ENCODE measurements at regions of chr5 and their contacts with region 1.

Region 1: GRCh38 chr5:180648641-180649296 is 631 bp downstream of the FLT4 start:
- DNase-seq: no peak
- H3K4me3 ChIP-seq: peak overlapping the region; percentile 21 to 62 (median 30)
- H3K27ac ChIP-seq: no peak overlapping the region
- H3K4me1 ChIP-seq: peaks cover 30% of the 10 kb centered on the region
- H3K27me3 ChIP-seq: peaks cover 3 to 13% of the 10 kb centered on the region in 2 experiments
- CTCF ChIP-seq: peak; percentile 35 to 53
- POLR2A ChIP-seq: no peak

Region 2: DNA sequence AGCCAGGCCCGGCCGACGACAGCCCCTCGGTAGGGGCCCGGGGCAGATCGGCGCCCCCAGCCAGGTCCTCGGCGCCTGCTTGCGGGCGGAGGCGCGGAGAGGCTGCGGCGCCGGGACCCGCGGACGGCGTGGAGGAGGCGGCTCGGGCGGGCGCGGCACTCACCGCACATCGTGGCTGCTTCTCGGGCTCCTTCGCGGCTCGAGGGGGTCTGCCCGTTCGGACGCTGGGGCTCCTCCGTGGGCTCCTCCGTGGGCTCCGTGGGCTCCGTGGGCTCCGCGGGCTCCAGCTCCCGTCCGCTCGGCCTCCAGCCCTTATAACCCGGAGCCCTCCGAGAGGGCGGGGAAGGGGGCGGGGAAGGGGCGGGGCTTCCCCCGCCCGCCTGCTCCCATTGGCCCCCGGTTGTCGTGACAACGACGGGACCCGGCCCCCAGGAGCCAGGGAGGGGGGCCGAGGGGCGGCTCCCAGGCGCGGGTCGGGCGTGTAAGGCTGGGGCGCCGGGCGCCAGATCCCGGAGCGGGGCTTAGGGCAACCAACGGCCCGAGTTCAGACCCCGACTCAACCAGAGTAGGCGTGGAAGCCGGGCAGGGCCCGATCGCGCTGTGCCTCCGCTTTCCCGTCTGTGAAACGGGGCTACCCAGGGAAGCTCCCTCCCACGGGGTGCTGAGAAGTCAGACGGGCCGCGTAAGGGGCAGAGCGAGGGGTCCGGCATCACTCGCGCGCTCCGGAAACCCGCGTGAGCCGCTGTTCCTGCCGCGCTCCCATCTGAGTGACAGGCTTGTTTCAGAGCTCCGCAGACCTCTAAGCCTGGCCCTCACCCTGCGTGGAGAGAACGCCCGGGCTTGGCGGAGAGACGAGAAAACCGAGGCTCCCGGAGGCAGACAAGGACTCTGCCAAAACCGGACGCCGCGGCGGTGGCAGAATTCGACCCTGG is 295.5 kb before region 1 on chr5 and contains the start of gene GFPT2:
- CTCF ChIA-PET with region 1: no interaction called
- POLR2A ChIA-PET with region 1: no interaction called
- dilution Hi-C with region 1: no loop called
- intact Hi-C with region 1: loop called (anchors 5 kb)
- DNase-seq: peak; percentile 65
- H3K4me3 ChIP-seq: peak within 1 kb of the TSS; percentile 56 to 74 (median 70)
- H3K27ac ChIP-seq: peak within 1 kb of the TSS; percentile 34
- H3K4me1 ChIP-seq: peaks cover 8% of the 10 kb centered on the region
- H3K27me3 ChIP-seq: peaks cover 7 to 30% of the 10 kb centered on the region in 2 experiments
- CTCF ChIP-seq: no peak
- POLR2A ChIP-seq: no peak
- total RNA-seq, gene GFPT2: 4.5 and 5.5 TPM in 2 replicates

Region 3: GRCh38 chr5:180494060-180494509 is 154.7 kb before region 1 on chr5 and contains the start of gene CNOT6:
- CTCF ChIA-PET with region 1: no interaction called
- POLR2A ChIA-PET with region 1: no interaction called
- dilution Hi-C with region 1: no loop called
- intact Hi-C with region 1: loop called (anchors 2 kb)
- DNase-seq: peak; percentile 93
- H3K4me3 ChIP-seq: peak within 1 kb of the TSS; percentile 86 to 90 (median 87)
- H3K27ac ChIP-seq: peak within 1 kb of the TSS; percentile 74
- H3K4me1 ChIP-seq: peaks cover 7% of the 10 kb centered on the region
- H3K27me3 ChIP-seq: no peaks in the 10 kb centered on the region
- CTCF ChIP-seq: no peak
- POLR2A ChIP-seq: no peak
- total RNA-seq, gene CNOT6: 33.8 and 35.5 TPM in 2 replicates

Region 4: GRCh38 chr5:180623411-180623834 is 25.3 kb before region 1 on chr5:
- CTCF ChIA-PET with region 1: interaction called, 6 read pairs
- POLR2A ChIA-PET with region 1: no interaction called
- dilution Hi-C with region 1: no loop called
- intact Hi-C with region 1: loop called (anchors 1 kb)
- DNase-seq: peak; percentile 23
- H3K4me3 ChIP-seq: no peak overlapping the region
- H3K27ac ChIP-seq: no peak overlapping the region
- H3K4me1 ChIP-seq: peaks cover 7% of the 10 kb centered on the region
- H3K27me3 ChIP-seq: no peaks in the 10 kb centered on the region
- CTCF ChIP-seq: no peak
- POLR2A ChIP-seq: no peak

Region 5: DNA sequence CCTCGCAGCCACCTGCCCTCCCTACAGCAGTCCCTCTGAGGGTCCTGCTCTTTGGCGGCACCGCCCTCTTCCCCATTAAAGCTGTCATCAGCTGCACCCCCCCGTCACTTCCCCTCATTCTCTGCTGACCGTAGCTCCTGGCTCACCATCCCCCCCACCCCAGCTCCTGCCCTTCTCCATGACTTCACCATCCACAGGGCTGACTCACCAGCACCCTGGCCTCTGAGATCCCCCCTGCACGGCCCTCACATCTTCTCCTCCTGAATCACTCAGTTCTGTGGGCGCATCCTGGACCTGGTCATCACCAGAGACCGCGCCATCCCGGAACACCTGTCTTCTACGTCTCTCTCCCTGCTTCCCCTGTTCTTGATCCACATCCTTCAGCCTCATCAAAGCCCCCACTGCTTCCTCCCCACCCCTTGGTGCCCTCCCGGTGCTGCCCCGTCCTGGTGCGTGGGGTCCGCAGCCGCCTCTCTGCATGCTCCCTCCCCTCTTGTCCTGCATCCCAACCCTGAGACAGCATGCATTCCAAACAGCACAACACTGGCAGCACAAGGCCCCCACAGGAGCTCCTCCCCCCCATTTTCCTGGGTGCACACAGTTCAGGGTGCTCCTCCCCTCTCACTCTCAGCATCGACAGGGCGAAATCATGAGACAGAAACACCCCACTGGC is 12.2 kb before region 1 on chr5:
- CTCF ChIA-PET with region 1: no interaction called
- POLR2A ChIA-PET with region 1: no interaction called
- dilution Hi-C with region 1: no loop called
- intact Hi-C with region 1: loop called (anchors 1 kb)
- DNase-seq: peak; percentile 38
- H3K4me3 ChIP-seq: no peak overlapping the region
- H3K27ac ChIP-seq: no peak overlapping the region
- H3K4me1 ChIP-seq: no peaks in the 10 kb centered on the region
- H3K27me3 ChIP-seq: no peaks in the 10 kb centered on the region
- CTCF ChIP-seq: no peak
- POLR2A ChIP-seq: no peak

Region 6: GRCh38 chr5:180782748-180783147 is 134.0 kb after region 1 on chr5:
- CTCF ChIA-PET with region 1: no interaction called
- POLR2A ChIA-PET with region 1: no interaction called
- dilution Hi-C with region 1: no loop called
- intact Hi-C with region 1: no loop called
- DNase-seq: no peak
- H3K4me3 ChIP-seq: no peak overlapping the region
- H3K27ac ChIP-seq: no peak overlapping the region
- H3K4me1 ChIP-seq: peaks cover 30% of the 10 kb centered on the region
- H3K27me3 ChIP-seq: no peaks in the 10 kb centered on the region
- CTCF ChIP-seq: no peak
- POLR2A ChIP-seq: no peak

Region 7: GRCh38 chr5:180810210-180810958 is 161.6 kb after region 1 on chr5:
- CTCF ChIA-PET with region 1: no interaction called
- POLR2A ChIA-PET with region 1: no interaction called
- dilution Hi-C with region 1: no loop called
- intact Hi-C with region 1: loop called (anchors 5 kb)
- DNase-seq: peak; percentile 95
- H3K4me3 ChIP-seq: peak overlapping the region; percentile 43 to 72 (median 60)
- H3K27ac ChIP-seq: peak overlapping the region; percentile 88
- H3K4me1 ChIP-seq: peaks cover 38% of the 10 kb centered on the region
- H3K27me3 ChIP-seq: no peaks in the 10 kb centered on the region
- CTCF ChIP-seq: no peak
- POLR2A ChIP-seq: peak; percentile 56